Right ventricle myocardium inferior (tissue), 1 donor: ENCODE measurements at regions of chr17 and their contacts with region 1.

Region 1: GRCh38 chr17:44218344-44219107 is 949 bp downstream of the UBTF start:
- DNase-seq: peak; percentile 95
- ATAC-seq: peak; percentile 67

Region 2: GRCh38 chr17:44269535-44270240 is 51.2 kb after region 1 on chr17:
- intact Hi-C with region 1: loop called (anchors 5 kb)
- DNase-seq: peak; percentile 59
- ATAC-seq: no peak

Region 3: GRCh38 chr17:44293509-44294226 is 75.1 kb after region 1 on chr17:
- intact Hi-C with region 1: no loop called
- DNase-seq: no peak
- ATAC-seq: no peak

Region 4: DNA sequence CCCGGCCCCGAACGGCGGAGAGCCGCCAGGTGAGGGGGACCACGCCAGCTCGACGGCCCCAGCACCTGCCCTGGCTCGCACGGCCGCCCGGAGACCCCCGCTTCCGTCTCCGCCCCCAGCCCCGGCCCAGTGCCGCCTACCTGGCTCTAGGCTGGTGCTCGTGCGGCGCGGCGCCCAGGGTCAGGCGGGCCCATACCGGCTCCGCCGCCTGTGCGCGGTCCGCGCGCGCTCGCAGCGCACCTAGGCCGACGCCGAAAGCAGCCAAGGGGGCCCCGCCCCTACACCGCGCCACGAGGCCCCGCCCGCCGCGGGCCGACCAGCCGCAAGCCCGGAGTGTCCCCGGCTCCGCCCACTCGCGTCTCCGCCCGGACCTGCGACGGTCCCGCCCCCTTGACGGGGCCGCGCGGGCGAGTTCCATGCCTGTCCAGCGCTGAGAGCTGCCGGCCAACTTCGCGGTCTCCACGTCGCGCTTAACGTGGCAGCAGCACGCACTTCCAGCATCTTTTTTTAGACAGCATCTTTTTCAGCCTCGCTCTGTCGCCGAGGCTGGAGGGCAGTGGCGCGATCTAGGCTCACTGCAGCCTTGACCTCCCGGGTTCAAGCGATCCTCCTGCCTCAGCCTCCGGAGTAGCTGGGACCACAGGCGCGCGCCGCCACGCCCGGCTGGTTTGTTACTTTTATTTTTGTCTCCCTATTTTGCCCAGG is 106.2 kb after region 1 on chr17 and contains the start of gene SLC25A39:
- intact Hi-C with region 1: loop called (anchors 1 kb)
- DNase-seq: peak; percentile 97
- ATAC-seq: peak; percentile 93
- total RNA-seq, gene SLC25A39: 50.6 TPM

Region 5: DNA sequence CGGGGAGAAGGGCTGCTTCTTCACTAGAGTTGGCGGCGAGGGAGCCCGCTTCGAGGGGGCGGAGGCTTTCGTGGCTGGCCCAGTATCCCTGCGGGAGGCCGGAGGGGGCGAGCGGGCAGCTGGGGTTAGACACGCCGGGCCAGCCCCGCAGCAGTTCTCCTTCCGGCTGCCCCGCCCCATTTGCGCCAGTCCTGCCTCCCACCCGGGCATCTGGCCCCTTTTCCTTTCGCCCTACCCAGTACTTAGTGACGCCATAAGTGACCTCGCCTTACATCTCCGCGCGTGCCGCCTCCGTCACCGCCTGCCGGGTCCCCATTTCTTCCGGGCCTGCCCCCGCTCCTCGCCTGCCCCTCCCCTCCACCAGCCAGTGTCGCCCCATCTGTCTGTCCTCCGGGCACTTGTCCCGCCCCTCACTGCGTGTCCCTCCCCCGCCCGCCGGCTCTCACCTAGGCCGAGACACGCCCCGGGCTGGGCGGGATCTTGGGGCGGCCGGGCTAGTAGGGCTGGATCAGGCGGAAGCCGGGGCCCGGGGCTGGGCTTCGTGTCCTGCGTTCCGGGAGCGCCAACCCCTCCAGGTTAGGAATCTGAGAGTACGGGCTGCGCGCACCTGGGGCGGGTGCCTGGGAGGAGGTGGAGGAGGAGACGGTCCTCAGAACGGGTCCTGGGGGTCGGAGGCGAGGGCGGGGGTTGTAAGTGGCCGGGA is 1029.1 kb after region 1 on chr17:
- intact Hi-C with region 1: no loop called
- DNase-seq: peak; percentile 95
- ATAC-seq: peak; percentile 88